ENCODE measurements at regions of chr11 and their contacts with region 1.

Region 1: DNA sequence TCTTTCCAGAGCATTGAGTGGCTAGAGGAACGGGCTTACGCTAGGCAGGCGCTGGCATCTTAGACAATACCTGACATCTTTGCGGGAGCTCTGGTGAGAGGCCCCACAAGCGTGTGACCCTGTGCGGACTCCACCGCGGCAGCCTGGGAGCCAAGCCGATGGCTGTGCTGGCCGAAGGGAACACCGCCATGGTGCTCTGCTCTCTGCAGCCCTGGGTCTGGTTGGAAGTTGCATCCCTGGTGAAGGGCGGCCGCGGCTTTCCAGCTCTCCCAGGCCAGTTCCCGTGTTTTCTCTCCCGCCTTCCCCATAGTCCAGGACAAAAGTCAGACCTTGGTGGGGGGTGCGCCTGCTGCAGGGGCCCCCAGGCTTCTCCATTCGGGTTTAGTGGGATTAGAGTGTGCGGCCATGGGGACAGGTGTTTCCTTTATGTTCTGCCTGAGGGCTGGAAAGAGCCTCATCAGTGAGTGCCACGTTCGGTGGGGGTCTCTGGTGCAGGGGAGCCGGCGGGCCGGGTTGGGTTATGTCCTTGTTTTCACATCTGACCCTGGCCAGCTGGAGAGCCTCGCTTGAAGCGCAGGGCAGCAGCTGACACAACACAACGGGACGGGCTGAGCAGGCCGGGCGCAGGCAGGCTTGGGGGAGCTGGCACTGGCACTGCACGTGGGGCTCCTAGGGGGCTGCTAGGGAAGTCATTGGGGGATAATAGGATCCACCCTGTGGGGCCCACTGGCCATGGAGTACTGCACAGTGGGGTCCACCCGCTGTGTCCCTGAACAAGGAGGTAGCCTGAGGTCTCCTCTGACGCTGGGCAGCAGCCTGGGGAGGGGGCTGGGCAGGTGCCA is 94.8 kb downstream of the KCNQ1 start:
- DNase-seq: no peak
- H3K4me3 ChIP-seq: no peak overlapping the region
- H3K27ac ChIP-seq: no peak overlapping the region
- H3K4me1 ChIP-seq: no peaks in the 10 kb centered on the region
- CTCF ChIP-seq: no peak

Region 2: GRCh38 chr11:2860636-2861035 is 321.0 kb after region 1 on chr11:
- CTCF ChIA-PET with region 1: no interaction called
- POLR2A ChIA-PET with region 1: no interaction called
- intact Hi-C with region 1: no loop called
- DNase-seq: no peak
- H3K4me3 ChIP-seq: no peak overlapping the region
- H3K27ac ChIP-seq: no peak overlapping the region
- H3K4me1 ChIP-seq: no peaks in the 10 kb centered on the region
- CTCF ChIP-seq: no peak

Region 3: DNA sequence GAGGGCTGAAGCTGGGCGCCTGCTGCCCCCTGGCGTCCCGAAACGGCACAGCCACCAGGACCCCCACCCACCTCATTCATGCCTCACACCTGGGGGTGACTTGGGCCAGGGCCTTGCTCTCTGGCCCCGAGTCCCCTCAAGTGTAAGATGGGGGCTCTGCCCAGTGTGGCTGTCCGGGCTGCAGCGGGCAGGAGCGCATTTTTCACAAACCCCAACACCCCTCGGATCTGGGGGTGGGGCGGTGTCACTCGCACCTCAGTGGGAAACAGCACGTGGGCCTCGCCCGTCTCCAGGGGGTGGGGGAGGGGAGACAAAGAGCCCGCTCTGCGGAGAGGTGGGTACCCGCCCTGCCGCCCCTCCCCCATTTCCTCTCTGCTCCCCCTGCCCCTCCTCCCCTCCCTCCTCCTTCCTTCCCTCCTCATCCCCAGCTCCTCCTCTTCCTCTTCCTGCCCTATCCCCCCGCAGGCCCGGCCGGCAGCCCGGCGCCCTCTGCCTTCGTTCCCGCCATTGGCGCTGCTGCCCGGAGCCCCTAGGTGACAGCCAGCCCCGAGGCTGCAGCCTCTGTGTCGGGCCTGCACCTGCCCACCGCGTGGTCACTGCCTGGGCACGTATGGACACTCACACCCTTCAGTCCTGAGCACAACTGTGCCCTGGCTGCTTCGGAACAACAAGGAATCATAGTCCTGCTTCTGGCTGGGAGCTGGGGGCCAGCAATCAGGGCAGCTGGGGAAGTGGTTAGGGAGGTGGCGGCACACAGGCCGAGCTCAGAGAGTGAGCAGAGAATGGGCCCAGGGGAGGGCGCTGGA is 352.8 kb after region 1 on chr11:
- CTCF ChIA-PET with region 1: interaction called, 10 read pairs
- POLR2A ChIA-PET with region 1: no interaction called
- intact Hi-C with region 1: no loop called
- DNase-seq: peak; percentile 71
- H3K4me3 ChIP-seq: peak overlapping the region; percentile 41
- H3K27ac ChIP-seq: peak overlapping the region; percentile 20
- H3K4me1 ChIP-seq: peaks cover 22% of the 10 kb centered on the region
- CTCF ChIP-seq: peak; percentile 87

Measured in OCI-LY7 (cell line).